ENCODE measurements at regions of chr10 and their contacts with region 1.

Region 1: DNA sequence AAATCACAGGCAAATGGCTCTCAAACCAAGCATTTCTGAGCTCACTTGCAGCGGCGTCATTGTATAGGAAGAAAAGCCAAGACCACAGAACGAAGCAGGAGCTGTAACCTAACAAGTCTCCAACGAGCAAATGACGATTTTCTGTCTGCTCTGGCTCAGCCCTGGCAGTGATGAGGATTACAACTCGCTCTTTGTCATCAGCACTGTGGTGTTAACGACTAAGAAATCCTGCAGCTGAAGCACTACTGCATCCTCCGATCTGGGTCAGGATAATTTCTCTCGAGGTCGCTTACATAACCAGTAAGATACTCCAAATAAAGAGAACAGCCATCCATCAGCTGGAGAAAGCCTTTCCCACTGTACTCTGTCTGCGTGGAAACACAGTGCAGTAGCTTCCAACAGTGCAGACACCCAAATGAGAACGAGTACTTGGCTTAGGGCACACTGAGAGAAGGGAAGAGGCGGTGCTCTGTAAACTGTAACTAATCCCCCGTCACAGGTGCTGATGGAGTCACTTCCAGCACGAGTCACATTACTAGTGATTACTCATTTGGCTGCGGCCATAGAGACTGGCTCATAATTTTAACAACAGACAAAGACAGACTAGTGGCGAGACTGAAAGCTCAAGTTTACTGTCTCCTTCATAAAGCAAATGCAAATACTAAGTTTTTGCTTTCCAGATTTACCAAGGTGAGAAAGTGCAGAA is 135.8 kb downstream of the NRBF2 start:
- DNase-seq: peak; percentile 55 to 95 (median 77)
- ATAC-seq: peak; percentile 90
- H3K4me3 ChIP-seq: peak overlapping the region; percentile 51 to 89
- H3K4me3 Mint-ChIP-seq: peak overlapping the region; percentile 97
- H3K27ac ChIP-seq: peak overlapping the region; percentile 81 to 97
- H3K27ac Mint-ChIP-seq: peak overlapping the region; percentile 99
- H3K4me1 ChIP-seq: peaks cover 20% of the 10 kb centered on the region
- H3K4me1 Mint-ChIP-seq: peaks cover 22% of the 10 kb centered on the region
- H3K27me3 ChIP-seq: no peaks in the 10 kb centered on the region
- H3K27me3 Mint-ChIP-seq: no peaks in the 10 kb centered on the region
- CTCF ChIP-seq: peak; percentile 23

Region 2: DNA sequence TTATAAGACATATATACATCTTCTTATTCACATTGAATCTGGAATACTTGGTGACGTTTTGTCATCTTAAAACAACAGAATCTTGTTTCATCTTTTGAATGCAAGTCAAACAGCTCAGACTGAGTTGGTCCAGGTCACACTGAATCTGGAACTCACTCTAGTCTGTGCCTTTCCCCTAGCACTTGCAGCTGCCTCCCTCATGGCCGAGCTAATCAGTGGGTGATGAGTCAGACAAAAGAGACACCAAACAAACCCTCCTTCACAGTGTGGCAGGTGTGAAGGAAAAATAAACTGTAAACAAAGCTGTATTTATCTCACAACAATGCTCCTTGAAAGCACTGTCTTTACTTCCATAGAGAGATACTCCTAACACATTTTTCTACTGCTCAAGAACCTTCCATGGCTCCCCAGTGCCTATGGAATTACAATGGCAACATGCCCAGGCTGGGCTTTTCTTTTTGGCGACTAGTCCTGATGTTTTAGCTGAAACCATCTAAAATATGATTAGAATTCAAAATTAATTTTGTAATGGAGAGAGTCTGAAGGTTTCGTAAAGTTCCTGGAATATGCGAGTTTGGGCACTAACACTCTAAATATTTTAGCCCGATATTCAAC is 754.8 kb before region 1 on chr10:
- CTCF ChIA-PET with region 1: no interaction called
- POLR2A ChIA-PET with region 1: no interaction called
- intact Hi-C with region 1: no loop called
- DNase-seq: no peak
- ATAC-seq: no peak
- H3K4me3 ChIP-seq: no peak overlapping the region
- H3K4me3 Mint-ChIP-seq: no peak overlapping the region
- H3K27ac ChIP-seq: no peak overlapping the region
- H3K27ac Mint-ChIP-seq: no peak overlapping the region
- H3K4me1 ChIP-seq: no peaks in the 10 kb centered on the region
- H3K4me1 Mint-ChIP-seq: no peaks in the 10 kb centered on the region
- H3K27me3 ChIP-seq: no peaks in the 10 kb centered on the region
- H3K27me3 Mint-ChIP-seq: peaks cover 5% of the 10 kb centered on the region
- CTCF ChIP-seq: no peak

Region 3: DNA sequence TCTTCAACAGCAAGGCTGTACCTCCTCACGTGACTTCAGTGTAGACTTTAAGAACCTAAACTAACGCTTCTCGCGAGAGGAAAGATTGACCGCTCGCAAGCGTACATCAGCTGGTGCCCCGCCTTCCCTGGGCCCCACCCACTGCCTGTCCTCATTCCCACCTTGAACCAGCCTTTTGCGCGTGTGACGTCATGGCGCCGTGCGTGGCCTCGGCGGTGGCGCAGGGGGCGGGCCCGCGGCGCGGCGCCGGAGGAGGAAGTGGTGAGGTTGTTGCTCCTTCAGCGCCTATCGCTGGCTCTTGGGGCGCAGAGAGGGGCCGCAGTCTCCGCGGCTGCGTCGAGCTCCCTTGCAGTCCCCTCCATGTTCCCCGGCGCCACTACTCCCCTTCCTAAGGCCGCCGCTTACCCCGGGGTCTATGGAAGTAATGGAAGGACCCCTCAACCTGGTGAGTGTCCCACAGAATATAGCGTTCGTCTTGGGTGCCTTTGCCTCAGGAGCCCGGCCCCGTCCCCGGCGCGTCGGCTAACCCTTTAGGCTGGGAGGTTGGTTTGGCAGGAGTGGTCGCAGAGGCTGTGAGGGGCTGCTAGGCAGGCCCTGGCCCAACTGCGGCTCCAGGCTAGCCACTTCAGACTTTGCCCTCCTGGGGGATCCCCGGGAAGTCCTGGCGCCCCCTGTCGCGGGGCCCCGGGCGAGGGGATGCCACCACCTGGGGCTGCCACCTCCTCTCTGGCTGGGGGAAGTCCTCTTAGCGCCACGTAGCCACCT is 135.7 kb before region 1 on chr10 and contains the start of gene NRBF2:
- CTCF ChIA-PET with region 1: no interaction called
- POLR2A ChIA-PET with region 1: interaction called, 6 read pairs
- intact Hi-C with region 1: loop called (anchors 1 to 2 kb)
- DNase-seq: peak; percentile 94 to 99 (median 97)
- ATAC-seq: peak; percentile 91
- H3K4me3 ChIP-seq: peak within 1 kb of the TSS; percentile 96 to 97
- H3K4me3 Mint-ChIP-seq: peak within 1 kb of the TSS; percentile 91
- H3K27ac ChIP-seq: peak within 1 kb of the TSS; percentile 96 to 98
- H3K27ac Mint-ChIP-seq: peak within 1 kb of the TSS; percentile 97
- H3K4me1 ChIP-seq: peaks cover 41% of the 10 kb centered on the region
- H3K4me1 Mint-ChIP-seq: peaks cover 37% of the 10 kb centered on the region
- H3K27me3 ChIP-seq: no peaks in the 10 kb centered on the region
- H3K27me3 Mint-ChIP-seq: peaks cover 5% of the 10 kb centered on the region
- CTCF ChIP-seq: peak; percentile 22
- total RNA-seq, gene NRBF2: 26.6 to 29.1 TPM

Region 4: DNA sequence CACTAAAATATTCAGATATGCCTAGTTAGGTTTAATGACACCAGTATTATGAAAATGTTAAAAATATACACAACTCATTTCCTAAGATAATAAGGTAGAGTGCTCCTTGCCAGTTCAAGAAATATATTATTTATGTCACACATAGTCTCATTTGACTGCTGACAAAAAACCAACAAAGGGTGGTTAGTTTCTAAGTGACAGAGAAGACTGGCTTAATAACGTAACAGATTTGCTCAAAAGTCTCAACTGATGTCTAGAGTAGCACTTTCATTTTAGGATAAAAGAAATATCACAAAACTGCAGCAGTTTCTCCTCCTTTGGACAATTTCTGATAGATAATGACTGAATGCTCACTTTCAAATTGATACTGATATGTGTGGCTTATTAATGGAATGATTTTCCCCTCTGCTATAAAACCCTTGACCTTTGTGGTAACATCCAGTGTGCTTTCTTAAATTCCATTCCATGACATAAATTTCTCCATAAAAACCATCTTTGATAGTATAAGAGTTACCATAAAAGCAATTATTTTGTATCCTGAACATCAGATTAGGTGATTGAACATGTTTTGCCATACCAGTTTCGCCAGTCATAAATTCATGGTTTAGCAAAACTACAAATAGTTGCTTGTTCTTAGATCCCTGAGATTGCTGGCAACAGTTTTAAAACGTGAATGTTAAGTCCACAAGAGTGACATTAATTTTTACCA is 41.6 kb before region 1 on chr10:
- CTCF ChIA-PET with region 1: no interaction called
- POLR2A ChIA-PET with region 1: interaction called, 10 read pairs
- intact Hi-C with region 1: loop called in 1 of 2 experiments (anchors 2 kb)
- DNase-seq: peak in 2 of 9 experiments; percentile 30 to 59
- ATAC-seq: peak; percentile 36
- H3K4me3 ChIP-seq: no peak overlapping the region
- H3K4me3 Mint-ChIP-seq: peak overlapping the region; percentile 61
- H3K27ac ChIP-seq: peak overlapping the region in 1 of 2 experiments; percentile 49
- H3K27ac Mint-ChIP-seq: peak overlapping the region; percentile 88
- H3K4me1 ChIP-seq: peaks cover 42% of the 10 kb centered on the region
- H3K4me1 Mint-ChIP-seq: peaks cover 72% of the 10 kb centered on the region
- H3K27me3 ChIP-seq: no peaks in the 10 kb centered on the region
- H3K27me3 Mint-ChIP-seq: no peaks in the 10 kb centered on the region
- CTCF ChIP-seq: no peak

Region 5: DNA sequence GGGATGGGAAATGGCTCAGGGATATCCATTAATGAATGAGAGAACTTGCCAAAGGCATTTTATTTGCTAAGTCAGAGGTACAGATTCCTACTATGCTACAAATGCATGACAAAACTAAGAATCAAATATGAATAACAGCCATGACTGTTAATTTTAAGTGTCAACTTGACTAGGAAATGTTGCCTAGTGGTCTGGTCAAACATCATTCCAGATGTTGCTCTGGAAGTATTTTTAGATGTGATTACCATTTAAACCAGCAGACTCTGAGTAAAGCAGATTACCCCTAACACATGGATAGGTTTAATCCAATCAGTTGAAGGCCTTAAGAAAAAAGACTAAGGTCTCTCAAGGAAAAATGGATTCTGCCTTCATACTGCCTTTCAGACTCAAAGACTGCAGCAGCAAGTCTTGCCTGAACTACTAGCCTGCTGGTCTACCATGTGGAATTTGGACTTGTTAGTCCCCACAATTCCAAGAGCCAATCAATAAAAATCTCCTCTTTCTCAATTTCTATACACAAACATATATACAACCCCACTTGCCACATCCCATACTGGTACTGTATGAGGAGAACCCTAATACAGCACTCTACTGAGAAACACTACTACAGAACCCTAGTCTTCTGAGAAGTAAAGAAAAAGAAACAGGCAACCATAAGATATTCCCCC is 16.7 kb before region 1 on chr10:
- CTCF ChIA-PET with region 1: interaction called, 4 read pairs
- POLR2A ChIA-PET with region 1: interaction called, 7 read pairs
- intact Hi-C with region 1: loop called in 1 of 2 experiments (anchors 1 kb)
- DNase-seq: no peak
- ATAC-seq: no peak
- H3K4me3 ChIP-seq: no peak overlapping the region
- H3K4me3 Mint-ChIP-seq: no peak overlapping the region
- H3K27ac ChIP-seq: peak overlapping the region in 1 of 2 experiments; percentile 37
- H3K27ac Mint-ChIP-seq: peak overlapping the region; percentile 56
- H3K4me1 ChIP-seq: peaks cover 16% of the 10 kb centered on the region
- H3K4me1 Mint-ChIP-seq: peaks cover 71% of the 10 kb centered on the region
- H3K27me3 ChIP-seq: no peaks in the 10 kb centered on the region
- H3K27me3 Mint-ChIP-seq: no peaks in the 10 kb centered on the region
- CTCF ChIP-seq: no peak

Region 6: GRCh38 chr10:63388421-63389031 is 119.6 kb after region 1 on chr10:
- CTCF ChIA-PET with region 1: no interaction called
- POLR2A ChIA-PET with region 1: no interaction called
- intact Hi-C with region 1: loop called in 1 of 2 experiments (anchors 5 kb)
- DNase-seq: peak in 2 of 9 experiments; percentile 36 to 63
- ATAC-seq: peak; percentile 73
- H3K4me3 ChIP-seq: peak overlapping the region; percentile 31 to 35
- H3K4me3 Mint-ChIP-seq: peak overlapping the region; percentile 69
- H3K27ac ChIP-seq: peak overlapping the region in 1 of 2 experiments; percentile 8
- H3K27ac Mint-ChIP-seq: peak overlapping the region; percentile 63
- H3K4me1 ChIP-seq: peaks cover 36% of the 10 kb centered on the region
- H3K4me1 Mint-ChIP-seq: peaks cover 65% of the 10 kb centered on the region
- H3K27me3 ChIP-seq: no peaks in the 10 kb centered on the region
- H3K27me3 Mint-ChIP-seq: no peaks in the 10 kb centered on the region
- CTCF ChIP-seq: no peak

Region 7: DNA sequence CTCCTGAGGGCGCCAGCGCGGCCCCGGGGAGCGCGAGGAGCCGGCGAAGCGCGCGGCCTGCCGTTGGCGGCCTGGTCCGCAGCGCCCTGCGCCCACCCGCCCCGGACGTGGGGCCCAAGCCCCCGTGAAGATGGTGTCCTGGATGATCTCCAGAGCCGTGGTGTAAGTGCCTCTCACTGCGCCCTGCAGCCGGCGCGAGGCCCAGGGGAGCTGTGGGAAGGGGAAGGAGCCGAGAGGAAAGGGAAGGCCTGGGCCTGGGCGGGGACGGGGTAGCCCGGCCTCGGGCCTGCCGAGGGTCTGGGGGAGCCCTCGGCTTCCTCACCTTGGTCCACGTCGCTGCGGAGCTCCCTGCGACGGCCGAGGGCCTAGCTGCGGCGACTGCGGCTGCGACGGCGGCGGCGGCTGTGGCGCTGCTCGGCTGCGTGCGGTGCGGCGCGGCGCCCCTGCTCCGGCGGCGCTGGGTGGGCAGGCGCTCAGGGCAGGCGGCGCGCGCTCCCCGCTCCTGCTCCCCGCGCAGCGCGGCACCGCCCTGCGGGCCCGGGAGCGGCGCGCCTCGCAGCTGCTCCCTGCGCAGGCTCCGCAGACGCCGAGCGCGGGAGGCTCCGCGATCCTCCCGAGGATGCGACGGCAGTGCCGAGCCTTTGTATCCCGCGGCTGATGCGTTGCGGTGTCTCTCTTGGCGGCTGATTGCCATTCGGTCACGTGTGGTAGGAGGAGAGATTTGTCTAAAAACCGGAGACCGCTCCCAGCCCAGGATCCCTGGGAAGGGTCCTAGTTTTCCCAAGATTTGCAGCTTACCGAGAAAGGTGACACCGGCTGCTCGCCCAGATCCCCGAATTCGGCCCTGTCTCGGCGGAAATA is 252.7 kb after region 1 on chr10:
- CTCF ChIA-PET with region 1: no interaction called
- POLR2A ChIA-PET with region 1: interaction called, 8 read pairs
- intact Hi-C with region 1: loop called (anchors 1 kb)
- DNase-seq: peak; percentile 15 to 85 (median 55)
- ATAC-seq: peak; percentile 72
- H3K4me3 ChIP-seq: peak overlapping the region; percentile 61 to 81
- H3K4me3 Mint-ChIP-seq: peak overlapping the region; percentile 82
- H3K27ac ChIP-seq: peak overlapping the region; percentile 63 to 79
- H3K27ac Mint-ChIP-seq: peak overlapping the region; percentile 88
- H3K4me1 ChIP-seq: peaks cover 29% of the 10 kb centered on the region
- H3K4me1 Mint-ChIP-seq: peaks cover 67% of the 10 kb centered on the region
- H3K27me3 ChIP-seq: no peaks in the 10 kb centered on the region
- H3K27me3 Mint-ChIP-seq: no peaks in the 10 kb centered on the region
- CTCF ChIP-seq: no peak

Region 8: DNA sequence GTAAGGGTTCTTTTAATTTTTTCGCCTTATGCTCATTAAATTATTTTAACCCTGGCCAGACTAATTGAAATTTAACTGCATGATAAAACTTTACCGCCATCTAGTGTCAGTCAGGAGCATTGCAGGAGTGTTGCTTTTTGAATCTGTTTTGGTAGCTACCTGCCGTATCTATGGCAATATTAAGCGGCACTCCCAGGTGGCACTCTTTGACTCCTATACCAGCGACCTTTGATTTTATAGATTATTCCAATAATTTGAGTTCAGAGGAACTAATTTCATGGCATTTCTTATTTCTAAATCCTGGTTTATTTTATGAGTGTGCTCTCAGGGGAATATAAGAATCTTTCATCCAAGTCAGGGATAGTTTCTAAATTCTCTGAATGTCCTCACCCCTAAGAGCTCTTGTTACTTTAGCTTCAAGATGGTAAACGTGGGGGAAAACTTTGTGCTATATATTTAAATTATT is 451.2 kb after region 1 on chr10:
- CTCF ChIA-PET with region 1: interaction called, 7 read pairs
- POLR2A ChIA-PET with region 1: no interaction called
- intact Hi-C with region 1: loop called in 1 of 2 experiments (anchors 1 kb)
- DNase-seq: peak; percentile 4 to 73 (median 46)
- ATAC-seq: peak; percentile 87
- H3K4me3 ChIP-seq: no peak overlapping the region
- H3K4me3 Mint-ChIP-seq: no peak overlapping the region
- H3K27ac ChIP-seq: no peak overlapping the region
- H3K27ac Mint-ChIP-seq: no peak overlapping the region
- H3K4me1 ChIP-seq: no peaks in the 10 kb centered on the region
- H3K4me1 Mint-ChIP-seq: peaks cover 4% of the 10 kb centered on the region
- H3K27me3 ChIP-seq: peaks cover 0 to 6% of the 10 kb centered on the region in 2 experiments
- H3K27me3 Mint-ChIP-seq: peaks cover 15% of the 10 kb centered on the region
- CTCF ChIP-seq: peak; percentile 100